ENCODE measurements at regions of chr6 and their contacts with region 1.

Region 1: DNA sequence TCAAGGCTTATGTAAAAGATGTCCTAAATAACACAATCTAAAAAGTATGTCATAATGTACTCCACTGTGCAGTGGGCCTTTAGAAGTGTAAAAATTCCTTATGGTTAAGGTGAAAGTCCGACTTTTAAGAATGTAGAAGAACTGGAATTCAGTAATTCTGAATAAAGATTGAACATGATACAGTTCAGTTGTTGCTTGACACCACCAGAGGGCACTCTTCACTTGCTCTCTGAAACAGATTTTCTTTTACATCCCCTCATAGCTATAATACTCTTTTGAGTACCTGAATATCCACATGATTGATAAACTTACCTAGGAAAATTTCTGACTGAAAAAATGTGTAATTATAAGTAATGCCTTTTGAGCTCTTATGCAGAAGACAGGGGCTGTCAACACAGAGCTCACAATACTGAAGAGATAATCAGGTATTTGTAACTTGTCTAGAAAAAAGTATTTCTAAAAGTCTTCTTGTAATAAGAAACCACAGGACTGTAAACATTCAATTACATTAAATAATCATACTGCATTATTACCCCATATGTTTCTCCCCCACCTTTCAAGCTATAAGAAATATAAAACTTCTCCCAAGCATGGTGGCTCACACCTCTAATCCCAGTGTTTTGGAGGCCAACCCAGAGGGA is 92.1 kb downstream of the POPDC3 start:
- DNase-seq: peak; percentile 53
- H3K4me3 Mint-ChIP-seq: no peak overlapping the region
- H3K27ac Mint-ChIP-seq: no peak overlapping the region
- H3K4me1 Mint-ChIP-seq: no peaks in the 10 kb centered on the region
- H3K27me3 Mint-ChIP-seq: peaks cover 4% of the 10 kb centered on the region

Region 2: GRCh38 chr6:105271189-105271588 is 183.5 kb after region 1 on chr6:
- CTCF ChIA-PET with region 1: interaction called, 5 read pairs
- intact Hi-C with region 1: loop called (anchors 1 kb)
- DNase-seq: no peak
- H3K4me3 Mint-ChIP-seq: no peak overlapping the region
- H3K27ac Mint-ChIP-seq: no peak overlapping the region
- H3K4me1 Mint-ChIP-seq: no peaks in the 10 kb centered on the region
- H3K27me3 Mint-ChIP-seq: no peaks in the 10 kb centered on the region

Region 3: GRCh38 chr6:105363100-105363754 is 275.5 kb after region 1 on chr6:
- CTCF ChIA-PET with region 1: interaction called, 4 read pairs
- intact Hi-C with region 1: loop called (anchors 1 kb)
- DNase-seq: no peak
- H3K4me3 Mint-ChIP-seq: no peak overlapping the region
- H3K27ac Mint-ChIP-seq: no peak overlapping the region
- H3K4me1 Mint-ChIP-seq: peaks cover 6% of the 10 kb centered on the region
- H3K27me3 Mint-ChIP-seq: no peaks in the 10 kb centered on the region

Region 4: DNA sequence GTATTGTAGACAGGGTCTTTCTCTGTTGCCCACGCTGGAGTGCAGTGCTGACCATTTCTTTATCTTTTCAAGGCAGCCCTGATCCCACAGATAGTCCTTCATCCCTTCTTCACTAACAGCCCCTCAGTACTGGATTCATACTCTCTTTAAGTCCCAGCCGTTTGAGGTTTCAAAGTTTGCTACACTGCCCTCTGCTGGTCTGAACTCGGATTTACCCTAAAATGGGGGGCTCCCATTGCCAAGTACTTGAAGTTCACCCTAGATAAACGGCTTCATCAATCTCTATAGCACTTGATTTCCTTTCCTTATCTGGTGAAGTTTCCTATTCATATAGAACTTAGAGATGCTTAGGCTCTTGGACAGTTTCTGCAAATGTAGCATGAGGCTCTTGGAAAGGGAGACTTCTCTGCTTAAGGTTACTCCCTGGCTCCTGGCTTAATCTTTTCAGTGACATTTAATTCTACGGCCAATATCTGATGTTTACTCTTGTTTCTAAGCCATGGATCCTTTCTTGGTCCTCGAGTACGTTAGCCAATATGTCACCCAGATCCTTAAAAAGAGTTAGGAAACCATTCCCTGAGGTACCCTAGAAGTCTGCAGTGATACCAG is 336.6 kb after region 1 on chr6:
- CTCF ChIA-PET with region 1: interaction called, 19 read pairs
- intact Hi-C with region 1: loop called (anchors 1 kb)
- DNase-seq: peak; percentile 74
- H3K4me3 Mint-ChIP-seq: no peak overlapping the region
- H3K27ac Mint-ChIP-seq: no peak overlapping the region
- H3K4me1 Mint-ChIP-seq: no peaks in the 10 kb centered on the region
- H3K27me3 Mint-ChIP-seq: peaks cover 3% of the 10 kb centered on the region